AG04449 (cell line): ENCODE measurements at regions of chr18 and their contacts with region 1.

Region 1: GRCh38 chr18:79528846-79529245 is 133.1 kb downstream of the NFATC1 start:
- DNase-seq: no peak
- H3K4me3 ChIP-seq: no peak overlapping the region
- CTCF ChIP-seq: peak; percentile 87

Region 2: DNA sequence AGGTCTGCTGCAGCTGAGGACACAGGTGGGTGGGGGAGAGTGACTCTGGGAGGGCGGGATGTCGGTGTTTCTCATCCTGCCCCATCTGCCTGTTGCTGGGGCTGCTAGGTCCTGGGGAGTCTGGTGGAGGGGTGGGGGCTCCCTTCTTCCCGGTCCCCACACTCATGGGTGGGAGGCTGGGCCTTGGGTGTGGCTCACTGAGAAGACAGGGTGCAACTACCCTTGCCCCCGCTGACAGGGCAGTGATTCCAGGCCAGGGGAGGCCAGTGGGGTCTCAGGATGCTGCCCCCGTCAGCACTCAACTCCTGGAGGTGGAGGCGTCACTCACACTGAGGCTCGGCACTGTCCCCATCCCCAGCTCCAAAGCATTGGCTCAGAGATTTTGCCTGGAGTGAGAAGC is 140.8 kb before region 1 on chr18:
- CTCF ChIA-PET with region 1: interaction called, 294 read pairs
- POLR2A ChIA-PET with region 1: no interaction called
- DNase-seq: no peak
- H3K4me3 ChIP-seq: no peak overlapping the region
- CTCF ChIP-seq: no peak

Region 3: GRCh38 chr18:79393635-79394533 is 135.0 kb before region 1 on chr18:
- CTCF ChIA-PET with region 1: interaction called, 21 read pairs
- POLR2A ChIA-PET with region 1: no interaction called
- DNase-seq: no peak
- H3K4me3 ChIP-seq: peak overlapping the region; percentile 49
- CTCF ChIP-seq: no peak

Region 4: DNA sequence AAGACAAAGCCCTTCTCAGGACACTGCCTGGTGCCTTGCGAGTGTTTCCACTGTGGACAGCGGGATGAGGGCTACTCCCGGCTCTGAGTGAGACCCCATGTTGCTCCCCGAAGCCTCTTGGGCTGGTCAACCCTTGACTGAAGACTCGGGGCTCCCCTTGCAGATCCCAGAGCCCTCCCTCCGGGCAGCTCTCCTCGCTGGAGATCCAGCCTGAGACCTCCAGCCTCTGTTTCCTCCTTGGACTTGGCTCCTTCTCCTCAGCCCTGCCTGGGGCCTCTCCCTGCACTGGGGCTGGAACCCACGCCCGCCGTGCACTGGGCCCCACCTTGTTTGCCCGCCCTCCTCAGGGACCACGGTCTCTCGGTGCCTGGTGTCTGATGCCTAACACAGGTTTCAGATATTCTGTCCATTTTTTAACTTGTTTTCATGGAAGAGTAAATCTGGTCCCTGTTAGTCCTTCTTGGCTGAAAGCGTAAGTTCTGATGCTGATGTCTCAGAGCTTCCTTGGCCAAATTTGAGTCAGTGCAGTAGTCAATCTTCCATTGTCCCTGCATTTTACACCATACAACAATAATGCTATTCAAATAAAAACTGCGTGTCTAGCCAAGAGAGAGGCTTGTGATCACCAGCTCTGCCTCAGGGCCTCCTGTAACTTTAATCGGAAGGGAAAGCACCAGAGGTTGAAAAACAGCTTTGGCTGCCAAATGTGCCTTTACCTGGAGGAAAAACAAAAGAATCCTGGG is 11.5 kb after region 1 on chr18:
- CTCF ChIA-PET with region 1: interaction called, 30 read pairs
- POLR2A ChIA-PET with region 1: no interaction called
- DNase-seq: no peak
- H3K4me3 ChIP-seq: no peak overlapping the region
- CTCF ChIP-seq: no peak